Caco-2 (cell line): ENCODE measurements at regions of chr1 and their contacts with region 1.

Region 1: DNA sequence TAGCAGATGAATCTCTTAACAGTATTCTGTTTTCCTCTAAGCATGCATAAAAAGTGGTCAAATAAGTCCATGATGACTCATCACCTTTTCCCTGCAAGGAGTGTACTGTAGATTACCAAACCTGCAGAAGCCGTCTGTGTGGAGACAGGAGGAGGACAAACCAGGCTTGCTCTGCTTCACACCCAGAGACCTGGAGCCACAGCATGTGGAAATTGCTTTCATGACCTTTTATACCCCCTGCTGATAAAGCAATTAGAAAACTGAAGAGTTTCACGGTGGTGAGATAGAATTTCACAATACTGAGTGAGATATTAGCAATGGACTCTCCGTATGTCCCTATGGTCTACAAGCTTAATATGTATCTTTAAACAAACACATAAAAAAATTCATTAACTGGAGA is 9.3 kb downstream of the CORT start:
- DNase-seq: peak; percentile 52 to 63
- H3K4me3 ChIP-seq: no peak overlapping the region
- H3K4me3 Mint-ChIP-seq: no peak overlapping the region
- H3K27ac Mint-ChIP-seq: no peak overlapping the region
- H3K4me1 ChIP-seq: peaks cover 7% of the 10 kb centered on the region; the same call in 1 of the 2 replicates
- H3K4me1 Mint-ChIP-seq: no peaks in the 10 kb centered on the region
- H3K27me3 ChIP-seq: no peaks in the 10 kb centered on the region
- H3K27me3 Mint-ChIP-seq: no peaks in the 10 kb centered on the region
- CTCF ChIP-seq: no peak

Region 2: GRCh38 chr1:10472220-10473144 is 13.3 kb after region 1 on chr1 and contains the start of gene DFFA:
- CTCF ChIA-PET with region 1: no interaction called
- POLR2A ChIA-PET with region 1: interaction called, 10 read pairs
- intact Hi-C with region 1: no loop called
- DNase-seq: peak; percentile 93 to 96
- H3K4me3 ChIP-seq: peak within 1 kb of the TSS; percentile 58
- H3K4me3 Mint-ChIP-seq: peak within 1 kb of the TSS; percentile 94
- H3K27ac Mint-ChIP-seq: peak within 1 kb of the TSS; percentile 95
- H3K4me1 ChIP-seq: 0 out of 2 replicates have a peak, but pooled peaks cover 4% of the 10 kb centered on the region
- H3K4me1 Mint-ChIP-seq: peaks cover 14% of the 10 kb centered on the region
- H3K27me3 ChIP-seq: no peaks in the 10 kb centered on the region
- H3K27me3 Mint-ChIP-seq: no peaks in the 10 kb centered on the region
- CTCF ChIP-seq: no peak
- total RNA-seq, gene DFFA: 80.2 and 80.4 TPM in 2 replicates

Region 3: DNA sequence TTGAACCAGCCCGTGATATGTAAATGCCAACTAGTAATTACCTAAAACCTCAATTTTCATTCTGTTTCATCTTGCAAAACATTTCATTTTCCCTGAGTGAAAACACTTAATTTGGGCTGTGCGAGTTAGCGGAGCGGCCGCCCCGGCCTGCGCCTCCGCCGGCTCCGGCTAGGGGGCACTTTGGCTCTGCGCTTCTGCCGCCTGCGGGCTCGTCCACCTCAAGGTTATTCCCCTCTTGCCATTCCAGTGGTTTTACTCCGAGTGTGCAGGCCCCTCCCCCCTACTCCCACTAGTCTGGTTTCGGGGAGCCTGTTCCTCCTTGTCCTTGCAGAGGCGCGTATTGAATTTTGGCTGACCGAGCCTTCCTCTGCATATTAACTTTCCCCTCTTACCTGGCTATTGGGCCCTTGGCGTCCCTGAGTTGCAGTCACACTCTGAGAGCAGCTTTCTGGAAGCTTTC is 71.1 kb after region 1 on chr1:
- CTCF ChIA-PET with region 1: no interaction called
- POLR2A ChIA-PET with region 1: no interaction called
- intact Hi-C with region 1: no loop called
- DNase-seq: peak in 1 of 2 experiments; percentile 36
- H3K4me3 ChIP-seq: no peak overlapping the region
- H3K4me3 Mint-ChIP-seq: no peak overlapping the region
- H3K27ac Mint-ChIP-seq: no peak overlapping the region
- H3K4me1 ChIP-seq: peaks cover 29% of the 10 kb centered on the region
- H3K4me1 Mint-ChIP-seq: peaks cover 23% of the 10 kb centered on the region
- H3K27me3 ChIP-seq: no peaks in the 10 kb centered on the region
- H3K27me3 Mint-ChIP-seq: no peaks in the 10 kb centered on the region
- CTCF ChIP-seq: peak in 1 of 2 experiments; percentile 18